K562 (cell line): ENCODE measurements at regions of chr16 and their contacts with region 1.

Region 1: GRCh38 chr16:27321011-27321915 is 7.5 kb downstream of the IL4R start:
- DNase-seq: no peak
- ATAC-seq: no peak
- H3K4me3 ChIP-seq: no peak overlapping the region
- H3K27ac ChIP-seq: no peak overlapping the region
- H3K4me1 ChIP-seq: no peaks in the 10 kb centered on the region
- H3K27me3 ChIP-seq: peaks cover 3 to 13% of the 10 kb centered on the region in 2 experiments; a peak in 2 of 5 replicates
- CTCF ChIP-seq: no peak
- EP300 ChIP-seq: no peak
- POLR2A ChIP-seq: no peak
- RAD21 ChIP-seq: no peak

Region 2: DNA sequence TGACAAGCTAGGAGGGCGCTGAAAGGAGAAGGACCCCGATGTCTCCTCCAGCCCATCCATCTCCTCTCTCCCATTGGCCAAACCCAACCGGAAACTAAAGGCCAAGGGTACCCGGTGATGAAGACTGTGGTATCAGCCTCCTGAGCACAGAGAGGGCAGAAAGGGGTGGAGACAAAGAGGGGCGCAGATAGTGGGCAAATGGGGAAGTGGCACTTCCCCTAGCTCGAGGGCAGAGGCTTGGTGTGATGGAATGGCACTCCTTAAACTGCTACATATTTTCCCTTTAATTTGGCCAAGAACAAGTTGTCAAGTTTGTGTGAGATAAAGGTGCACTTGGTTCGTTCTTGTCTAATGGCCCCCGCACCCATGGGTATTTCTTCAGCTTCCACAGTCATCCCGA is 20.3 kb after region 1 on chr16:
- CTCF ChIA-PET with region 1: no interaction called
- POLR2A ChIA-PET with region 1: interaction called, 18 read pairs
- in situ Hi-C with region 1: no loop called
- intact Hi-C with region 1: loop called (anchors 1 kb)
- DNase-seq: no peak
- ATAC-seq: no peak
- H3K4me3 ChIP-seq: no peak overlapping the region
- H3K27ac ChIP-seq: no peak overlapping the region
- H3K4me1 ChIP-seq: peaks cover 0 to 4% of the 10 kb centered on the region in 2 experiments; a peak in 2 of 5 replicates
- H3K27me3 ChIP-seq: 0 out of 5 replicates have a peak, but pooled peaks cover 0 to 6% of the 10 kb centered on the region in 2 experiments
- CTCF ChIP-seq: no peak
- EP300 ChIP-seq: no peak
- POLR2A ChIP-seq: no peak
- RAD21 ChIP-seq: no peak